HepG2 (cell line): ENCODE measurements at regions of chr20 and their contacts with region 1.

Region 1: DNA sequence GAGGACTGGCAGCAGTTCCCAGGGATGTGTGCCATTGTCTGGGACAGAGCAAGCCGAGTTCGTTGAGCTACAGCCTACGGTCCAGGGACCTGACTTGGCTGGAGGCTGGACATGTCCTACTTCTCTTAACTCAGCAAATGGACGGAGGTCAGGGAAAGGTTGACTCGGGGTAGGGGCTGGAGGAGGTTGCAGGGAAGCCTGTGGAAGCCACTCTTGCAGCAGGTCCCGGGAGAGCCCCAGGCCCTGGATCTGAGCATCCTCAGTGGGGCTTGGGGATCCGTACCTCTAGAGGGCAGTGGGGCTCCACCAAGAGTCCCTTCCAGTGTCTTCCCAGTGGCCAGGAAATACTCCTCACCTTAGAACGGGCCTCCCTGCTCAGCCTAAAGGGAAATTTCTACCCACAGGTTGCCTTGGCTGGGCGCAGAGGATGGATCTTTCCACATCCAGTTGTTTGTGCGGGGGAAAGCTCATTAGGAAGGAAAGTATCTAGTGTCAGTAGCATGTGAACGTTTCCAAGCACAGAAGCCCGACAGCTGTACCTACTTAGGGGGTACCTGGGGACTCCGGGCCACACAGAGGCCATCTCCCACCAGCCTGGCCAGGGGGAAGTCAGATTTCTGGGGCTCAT is 170.2 kb downstream of the NFATC2 start:
- DNase-seq: peak; percentile 64
- ATAC-seq: peak; percentile 97
- H3K4me3 ChIP-seq: no peak overlapping the region
- H3K27ac ChIP-seq: no peak overlapping the region
- H3K4me1 ChIP-seq: no peaks in the 10 kb centered on the region
- H3K27me3 ChIP-seq: peaks cover 0 to 33% of the 10 kb centered on the region in 2 experiments; a peak in 3 of 5 replicates
- CTCF ChIP-seq: peak; percentile 98
- EP300 ChIP-seq: no peak
- POLR2A ChIP-seq: no peak
- RAD21 ChIP-seq: peak; percentile 96

Region 2: DNA sequence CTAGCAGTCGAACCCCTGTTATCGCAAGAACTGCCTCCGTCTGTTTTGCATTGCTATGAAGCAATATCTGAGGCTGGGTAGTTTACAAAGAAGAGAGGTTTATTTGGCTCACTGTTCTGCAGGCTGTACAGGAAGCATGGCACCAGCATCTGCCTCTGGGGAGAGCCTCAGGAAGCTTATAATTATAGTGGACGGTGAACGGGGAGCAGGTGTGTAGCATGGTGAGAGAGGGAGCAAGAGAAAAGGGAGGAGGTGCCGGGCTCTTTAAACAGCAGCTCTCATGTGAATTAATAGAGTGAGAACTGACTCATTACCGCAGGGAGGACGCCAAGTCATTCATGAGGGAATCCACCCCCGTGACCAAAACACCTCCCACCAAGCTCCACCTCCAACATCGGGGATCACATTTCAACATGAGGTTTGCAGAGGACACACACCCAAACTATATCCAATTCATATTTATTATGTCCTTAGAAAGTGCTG is 176.8 kb before region 1 on chr20:
- CTCF ChIA-PET with region 1: no interaction called
- POLR2A ChIA-PET with region 1: no interaction called
- in situ Hi-C with region 1: no loop called
- intact Hi-C with region 1: no loop called
- DNase-seq: no peak
- ATAC-seq: no peak
- H3K4me3 ChIP-seq: no peak overlapping the region
- H3K27ac ChIP-seq: no peak overlapping the region
- H3K4me1 ChIP-seq: no peaks in the 10 kb centered on the region
- H3K27me3 ChIP-seq: peaks cover 6 to 67% of the 10 kb centered on the region in 2 experiments
- CTCF ChIP-seq: no peak
- EP300 ChIP-seq: no peak
- POLR2A ChIP-seq: no peak
- RAD21 ChIP-seq: no peak

Region 3: DNA sequence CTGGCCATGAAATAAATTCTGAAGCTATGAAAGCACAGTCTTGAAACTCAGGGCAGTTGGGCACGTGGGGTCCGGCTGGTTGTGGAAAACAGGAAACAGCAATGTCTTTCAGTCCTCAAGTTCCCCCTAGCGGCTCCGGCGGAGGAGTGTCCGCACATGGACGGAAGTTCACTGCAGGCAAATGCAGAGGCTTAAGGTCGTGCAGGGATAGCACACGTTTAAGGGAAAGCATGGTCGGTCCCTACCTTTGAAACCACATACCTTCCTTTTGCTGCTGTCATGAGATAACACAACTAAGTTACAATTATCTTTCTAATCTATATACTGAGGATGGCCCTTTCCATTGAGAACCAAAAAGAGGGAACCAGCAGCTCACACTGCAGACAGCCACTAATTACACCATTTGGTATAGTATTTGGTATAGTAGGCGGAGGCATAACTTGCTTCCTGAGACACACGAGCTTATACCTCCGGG is 222.8 kb after region 1 on chr20:
- CTCF ChIA-PET with region 1: interaction called, 43 read pairs
- POLR2A ChIA-PET with region 1: no interaction called
- in situ Hi-C with region 1: loop called (anchors 5 kb)
- intact Hi-C with region 1: loop called (anchors 1 kb)
- DNase-seq: peak; percentile 88
- ATAC-seq: peak; percentile 98
- H3K4me3 ChIP-seq: no peak overlapping the region
- H3K27ac ChIP-seq: no peak overlapping the region
- H3K4me1 ChIP-seq: peaks cover 13% of the 10 kb centered on the region
- H3K27me3 ChIP-seq: no peaks in the 10 kb centered on the region
- CTCF ChIP-seq: peak; percentile 99
- EP300 ChIP-seq: no peak
- POLR2A ChIP-seq: no peak
- RAD21 ChIP-seq: peak; percentile 98

Region 4: GRCh38 chr20:51616060-51616459 is 243.8 kb after region 1 on chr20:
- CTCF ChIA-PET with region 1: no interaction called
- POLR2A ChIA-PET with region 1: no interaction called
- in situ Hi-C with region 1: no loop called
- intact Hi-C with region 1: loop called (anchors 1 kb)
- DNase-seq: no peak
- ATAC-seq: peak; percentile 69
- H3K4me3 ChIP-seq: no peak overlapping the region
- H3K27ac ChIP-seq: no peak overlapping the region
- H3K4me1 ChIP-seq: no peaks in the 10 kb centered on the region
- H3K27me3 ChIP-seq: no peaks in the 10 kb centered on the region
- CTCF ChIP-seq: peak; percentile 21; the same call in 1 of the 2 replicates
- EP300 ChIP-seq: no peak
- POLR2A ChIP-seq: no peak
- RAD21 ChIP-seq: no peak

Region 5: GRCh38 chr20:51624157-51624731 is 252.0 kb after region 1 on chr20:
- CTCF ChIA-PET with region 1: interaction called, 33 read pairs
- POLR2A ChIA-PET with region 1: no interaction called
- in situ Hi-C with region 1: no loop called
- intact Hi-C with region 1: loop called (anchors 1 kb)
- DNase-seq: peak; percentile 59
- ATAC-seq: peak; percentile 71
- H3K4me3 ChIP-seq: no peak overlapping the region
- H3K27ac ChIP-seq: no peak overlapping the region
- H3K4me1 ChIP-seq: peaks cover 14% of the 10 kb centered on the region
- H3K27me3 ChIP-seq: no peaks in the 10 kb centered on the region
- CTCF ChIP-seq: peak; percentile 85
- EP300 ChIP-seq: no peak
- POLR2A ChIP-seq: no peak
- RAD21 ChIP-seq: peak; percentile 75

Region 6: GRCh38 chr20:51966291-51966971 is 594.1 kb after region 1 on chr20:
- CTCF ChIA-PET with region 1: interaction called, 3 read pairs
- POLR2A ChIA-PET with region 1: no interaction called
- in situ Hi-C with region 1: no loop called
- intact Hi-C with region 1: loop called (anchors 5 kb)
- DNase-seq: peak; percentile 84
- ATAC-seq: peak; percentile 96
- H3K4me3 ChIP-seq: no peak overlapping the region
- H3K27ac ChIP-seq: no peak overlapping the region
- H3K4me1 ChIP-seq: peaks cover 20% of the 10 kb centered on the region
- H3K27me3 ChIP-seq: peaks cover 0 to 6% of the 10 kb centered on the region in 2 experiments; a peak in 1 of 5 replicates
- CTCF ChIP-seq: peak; percentile 88
- EP300 ChIP-seq: no peak
- POLR2A ChIP-seq: no peak
- RAD21 ChIP-seq: peak; percentile 65; the same call in 1 of the 2 replicates

Region 7: DNA sequence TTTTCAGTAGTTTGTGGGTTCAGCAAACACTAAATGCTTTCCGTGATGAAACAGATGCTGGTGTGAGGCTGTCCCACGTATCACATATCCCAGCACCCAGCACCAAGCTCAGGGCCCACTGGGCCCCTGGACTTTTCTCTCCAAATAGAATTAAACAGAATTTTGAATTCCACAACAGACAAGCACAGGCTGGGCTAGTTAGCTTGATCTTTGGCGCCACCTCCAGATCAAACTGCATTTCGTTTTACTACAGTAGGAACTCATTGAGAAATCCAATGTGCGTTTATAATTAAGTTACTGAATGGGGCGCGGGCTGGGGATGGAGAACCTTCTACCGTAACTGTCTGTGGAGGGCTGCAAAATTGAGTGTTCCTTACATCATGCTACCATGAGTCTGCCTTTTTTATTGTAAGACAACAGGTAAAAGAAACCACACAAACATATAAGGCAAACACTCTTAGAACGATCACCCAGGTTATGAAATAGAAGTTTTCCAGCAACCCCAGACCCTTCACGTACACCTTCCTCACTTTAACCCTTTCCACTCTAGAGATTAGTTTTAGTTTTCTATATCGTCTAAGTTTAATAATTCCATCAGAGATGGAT is 711.4 kb after region 1 on chr20:
- CTCF ChIA-PET with region 1: no interaction called
- POLR2A ChIA-PET with region 1: no interaction called
- in situ Hi-C with region 1: loop called (anchors 5 kb)
- intact Hi-C with region 1: loop called (anchors 1 kb)
- DNase-seq: peak; percentile 73
- ATAC-seq: peak; percentile 90
- H3K4me3 ChIP-seq: no peak overlapping the region
- H3K27ac ChIP-seq: no peak overlapping the region
- H3K4me1 ChIP-seq: peaks cover 12% of the 10 kb centered on the region; the same call in 1 of the 2 replicates
- H3K27me3 ChIP-seq: no peaks in the 10 kb centered on the region
- CTCF ChIP-seq: peak; percentile 95
- EP300 ChIP-seq: no peak
- POLR2A ChIP-seq: no peak
- RAD21 ChIP-seq: peak; percentile 94

Region 8: GRCh38 chr20:52150440-52151258 is 778.4 kb after region 1 on chr20:
- CTCF ChIA-PET with region 1: no interaction called
- POLR2A ChIA-PET with region 1: no interaction called
- in situ Hi-C with region 1: no loop called
- intact Hi-C with region 1: loop called (anchors 1 kb)
- DNase-seq: peak; percentile 58
- ATAC-seq: peak; percentile 82
- H3K4me3 ChIP-seq: no peak overlapping the region
- H3K27ac ChIP-seq: no peak overlapping the region
- H3K4me1 ChIP-seq: no peaks in the 10 kb centered on the region
- H3K27me3 ChIP-seq: no peaks in the 10 kb centered on the region
- CTCF ChIP-seq: peak; percentile 85
- EP300 ChIP-seq: no peak
- POLR2A ChIP-seq: no peak
- RAD21 ChIP-seq: no peak; the same call in 1 of the 2 replicates